ENCODE measurements at regions of chr17 and their contacts with region 1.

Region 1: GRCh38 chr17:37083456-37083855 is 134.7 kb downstream of the AATF start:
- DNase-seq: no peak
- ATAC-seq: peak; percentile 29
- H3K4me3 ChIP-seq: no peak overlapping the region
- H3K27ac ChIP-seq: no peak overlapping the region
- H3K4me1 ChIP-seq: no peaks in the 10 kb centered on the region; a peak in 1 of 5 replicates
- H3K27me3 ChIP-seq: no peaks in the 10 kb centered on the region
- CTCF ChIP-seq: no peak
- EP300 ChIP-seq: no peak
- POLR2A ChIP-seq: 0 out of 2 replicates have a peak, but pooled peaks have one; percentile 3
- RAD21 ChIP-seq: no peak

Region 2: GRCh38 chr17:37094391-37094790 is 10.9 kb after region 1 on chr17:
- CTCF ChIA-PET with region 1: no interaction called
- POLR2A ChIA-PET with region 1: interaction called, 10 read pairs
- in situ Hi-C with region 1: no loop called
- intact Hi-C with region 1: no loop called
- DNase-seq: no peak
- ATAC-seq: no peak
- H3K4me3 ChIP-seq: no peak overlapping the region
- H3K27ac ChIP-seq: no peak overlapping the region
- H3K4me1 ChIP-seq: no peaks in the 10 kb centered on the region
- H3K27me3 ChIP-seq: no peaks in the 10 kb centered on the region
- CTCF ChIP-seq: no peak
- EP300 ChIP-seq: no peak
- POLR2A ChIP-seq: no peak
- RAD21 ChIP-seq: no peak

Region 3: GRCh38 chr17:37160944-37161343 is 77.5 kb after region 1 on chr17:
- CTCF ChIA-PET with region 1: no interaction called
- POLR2A ChIA-PET with region 1: no interaction called
- in situ Hi-C with region 1: no loop called
- intact Hi-C with region 1: no loop called
- DNase-seq: no peak
- ATAC-seq: no peak
- H3K4me3 ChIP-seq: no peak overlapping the region
- H3K27ac ChIP-seq: no peak overlapping the region
- H3K4me1 ChIP-seq: no peaks in the 10 kb centered on the region
- H3K27me3 ChIP-seq: no peaks in the 10 kb centered on the region
- CTCF ChIP-seq: no peak
- EP300 ChIP-seq: no peak
- POLR2A ChIP-seq: no peak
- RAD21 ChIP-seq: no peak